HEK293T (cell line): ENCODE measurements at regions of chr15 and their contacts with region 1.

Region 1: GRCh38 chr15:83559310-83559966 is 94.5 kb upstream of the ADAMTSL3 start:
- DNase-seq: peak; percentile 79

Region 2: DNA sequence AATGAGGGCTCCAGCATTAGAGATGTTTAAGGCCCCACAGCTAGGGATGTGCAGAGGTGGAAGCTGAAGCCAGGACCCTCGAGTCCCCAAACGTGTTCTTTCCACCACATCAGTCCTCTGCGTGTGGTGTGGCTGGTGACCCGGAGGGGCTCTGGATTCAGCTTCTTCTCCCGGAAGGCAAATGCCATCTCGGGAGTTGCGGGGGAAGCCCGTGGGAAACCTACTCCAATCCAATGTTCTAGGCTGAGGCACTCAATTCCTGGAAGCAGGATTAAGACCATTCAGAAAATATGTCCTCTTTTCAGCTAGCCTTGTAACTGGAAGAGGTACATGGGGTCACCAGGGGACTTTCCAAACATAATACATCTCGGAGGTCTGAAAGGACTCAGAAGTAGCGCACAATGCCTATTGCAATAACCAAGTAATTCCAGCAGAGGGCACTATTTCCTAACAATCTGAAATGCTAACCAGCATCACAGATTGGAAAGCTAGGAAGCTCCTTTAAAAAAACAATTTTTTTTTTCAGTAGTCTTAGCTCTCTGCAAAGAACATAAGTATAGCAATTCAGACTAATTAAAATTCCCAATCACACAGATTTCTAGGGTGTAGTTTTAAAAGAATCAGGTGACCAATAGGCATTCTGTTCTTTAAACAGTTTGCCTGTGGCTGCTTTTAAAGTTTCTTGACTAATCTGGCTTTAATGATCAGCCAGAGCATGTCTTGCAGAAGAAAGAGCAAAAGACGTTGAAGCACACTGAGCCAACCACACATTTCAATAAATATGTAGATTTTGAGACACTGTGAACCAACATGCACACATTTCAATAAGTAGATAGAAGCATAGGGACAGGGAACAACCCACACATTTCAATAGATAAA is 311.0 kb before region 1 on chr15:
- CTCF ChIA-PET with region 1: interaction called, 12 read pairs
- POLR2A ChIA-PET with region 1: no interaction called
- DNase-seq: peak; percentile 60

Region 3: DNA sequence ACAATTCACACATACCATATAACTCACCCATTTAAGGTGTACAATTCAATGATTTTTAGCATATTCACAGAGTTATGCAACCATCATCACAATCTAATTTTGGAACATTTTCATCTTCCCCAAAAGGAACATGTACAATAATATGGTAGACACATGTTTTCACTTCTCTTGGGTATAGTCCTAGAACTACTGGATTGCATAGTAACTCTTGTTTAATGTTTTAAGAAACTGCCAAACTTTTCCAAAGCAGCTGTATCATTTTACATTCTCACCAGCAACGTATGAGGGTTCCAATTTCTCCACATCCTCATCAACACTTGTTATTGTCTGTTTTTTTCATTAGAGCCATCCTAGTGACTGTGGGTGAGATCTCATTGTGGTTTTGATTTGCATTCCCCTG is 289.3 kb before region 1 on chr15:
- CTCF ChIA-PET with region 1: no interaction called
- POLR2A ChIA-PET with region 1: no interaction called
- DNase-seq: no peak

Region 4: DNA sequence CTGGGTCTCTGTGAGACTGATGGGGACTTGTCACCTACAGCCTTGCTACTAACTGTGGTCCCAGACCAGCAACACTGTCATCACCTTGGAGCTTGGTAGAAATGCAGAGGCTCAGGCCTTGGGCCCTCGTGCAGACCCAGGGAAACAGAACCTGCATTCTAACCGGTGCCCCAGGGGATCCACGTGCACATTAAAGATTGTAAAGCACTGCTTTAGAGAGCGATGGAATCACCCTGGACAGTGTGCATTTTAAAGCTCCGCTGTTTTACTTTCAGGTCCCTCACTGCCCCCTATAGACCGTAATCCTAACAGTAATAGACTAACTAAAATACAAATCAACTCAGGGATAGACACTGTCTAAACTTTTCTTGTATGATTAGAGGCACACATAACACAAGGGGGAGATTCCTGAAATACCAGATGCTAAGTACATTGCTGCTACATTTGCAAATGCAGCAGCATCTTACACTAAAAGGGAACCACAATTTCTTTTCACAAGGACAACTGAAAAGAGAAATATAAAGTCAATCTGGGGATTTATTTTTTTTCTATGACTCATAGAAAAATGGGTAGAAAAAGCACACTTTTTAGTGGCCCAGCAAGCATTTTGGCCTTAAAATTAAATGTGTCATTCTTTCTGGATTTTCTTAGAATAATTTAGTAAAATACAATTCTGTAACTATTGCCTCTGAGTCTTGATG is 122.8 kb before region 1 on chr15:
- CTCF ChIA-PET with region 1: interaction called, 39 read pairs
- POLR2A ChIA-PET with region 1: no interaction called
- DNase-seq: peak; percentile 63

Region 5: GRCh38 chr15:83446904-83447709 is 112.3 kb before region 1 on chr15 and contains the start of gene SH3GL3:
- CTCF ChIA-PET with region 1: interaction called, 16 read pairs
- POLR2A ChIA-PET with region 1: interaction called, 9 read pairs
- DNase-seq: peak; percentile 83

Region 6: GRCh38 chr15:83571820-83572707 is 12.6 kb after region 1 on chr15:
- CTCF ChIA-PET with region 1: interaction called, 21 read pairs
- POLR2A ChIA-PET with region 1: no interaction called
- DNase-seq: peak; percentile 39

Region 7: DNA sequence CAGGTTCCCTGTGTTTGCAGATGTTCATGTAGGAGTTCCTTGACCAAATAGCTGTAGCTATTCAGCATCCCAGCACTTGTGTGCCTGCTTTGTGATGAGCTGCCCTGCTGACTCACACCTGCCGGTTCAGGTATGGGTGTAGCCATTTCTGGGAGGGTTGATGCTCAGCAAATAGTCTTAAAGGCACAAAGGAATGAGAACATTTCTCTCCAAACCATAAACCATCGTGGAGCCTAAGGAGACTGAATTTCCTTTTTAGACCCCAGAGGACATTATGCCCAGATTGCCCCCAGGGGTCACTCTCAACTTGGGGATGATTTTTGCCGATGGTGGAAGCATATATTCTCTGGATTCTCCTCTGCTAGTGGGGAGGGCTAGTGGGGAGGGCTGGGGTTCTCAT is 175.0 kb after region 1 on chr15:
- CTCF ChIA-PET with region 1: no interaction called
- POLR2A ChIA-PET with region 1: no interaction called
- DNase-seq: peak; percentile 36